ENCODE measurements at regions of chr9 and their contacts with region 1.

Region 1: DNA sequence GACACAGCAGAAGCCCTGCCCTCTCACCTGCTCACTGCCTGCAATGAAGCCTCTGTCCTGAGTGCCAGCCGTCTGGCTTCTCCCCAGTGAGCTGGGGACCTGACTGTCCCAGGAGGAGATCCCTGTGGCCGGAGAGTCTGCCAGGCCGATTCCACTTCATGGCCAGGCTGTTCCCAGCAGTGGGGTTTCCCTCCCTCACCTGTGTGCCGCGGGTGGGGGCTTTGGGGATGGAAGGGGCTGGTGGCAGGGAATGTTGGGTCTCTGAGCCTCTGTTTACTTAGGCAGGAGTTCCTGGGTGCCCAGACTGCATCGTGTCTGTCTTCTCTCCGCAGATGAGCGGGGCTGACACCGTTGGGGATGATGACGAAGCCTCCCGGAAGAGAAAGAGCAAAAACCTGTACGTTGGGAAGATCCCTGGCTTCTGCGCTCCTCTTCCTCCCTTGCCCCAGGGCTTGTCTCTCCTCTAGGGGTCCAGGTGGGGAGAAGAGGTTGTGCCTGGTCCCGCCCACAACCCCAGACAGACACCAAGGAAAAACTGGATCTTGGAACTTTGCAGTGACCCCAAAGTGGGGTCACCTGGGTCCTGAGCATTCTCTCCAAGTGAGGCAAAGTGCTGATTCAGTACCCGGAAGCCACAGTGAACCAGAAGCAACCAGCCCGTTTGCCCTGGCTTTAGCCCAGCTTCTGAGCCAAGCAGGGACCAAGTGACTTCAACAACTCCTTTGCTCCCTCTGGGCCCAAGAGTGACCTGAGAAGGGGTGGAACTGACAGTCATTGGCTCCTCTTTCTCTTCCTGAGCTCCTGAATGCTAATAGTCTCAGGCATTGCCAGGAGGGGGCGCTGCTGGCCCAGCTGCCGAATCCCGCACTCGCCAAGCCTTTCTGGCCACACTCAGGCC is 127.7 kb downstream of the RGS3 start:
- DNase-seq: peak; percentile 79
- H3K4me3 ChIP-seq: no peak overlapping the region
- H3K27ac ChIP-seq: peak overlapping the region; percentile 51
- H3K4me1 ChIP-seq: peaks cover 68% of the 10 kb centered on the region
- H3K27me3 ChIP-seq: no peaks in the 10 kb centered on the region
- CTCF ChIP-seq: peak; percentile 90 to 91
- POLR2A ChIP-seq: no peak

Region 2: DNA sequence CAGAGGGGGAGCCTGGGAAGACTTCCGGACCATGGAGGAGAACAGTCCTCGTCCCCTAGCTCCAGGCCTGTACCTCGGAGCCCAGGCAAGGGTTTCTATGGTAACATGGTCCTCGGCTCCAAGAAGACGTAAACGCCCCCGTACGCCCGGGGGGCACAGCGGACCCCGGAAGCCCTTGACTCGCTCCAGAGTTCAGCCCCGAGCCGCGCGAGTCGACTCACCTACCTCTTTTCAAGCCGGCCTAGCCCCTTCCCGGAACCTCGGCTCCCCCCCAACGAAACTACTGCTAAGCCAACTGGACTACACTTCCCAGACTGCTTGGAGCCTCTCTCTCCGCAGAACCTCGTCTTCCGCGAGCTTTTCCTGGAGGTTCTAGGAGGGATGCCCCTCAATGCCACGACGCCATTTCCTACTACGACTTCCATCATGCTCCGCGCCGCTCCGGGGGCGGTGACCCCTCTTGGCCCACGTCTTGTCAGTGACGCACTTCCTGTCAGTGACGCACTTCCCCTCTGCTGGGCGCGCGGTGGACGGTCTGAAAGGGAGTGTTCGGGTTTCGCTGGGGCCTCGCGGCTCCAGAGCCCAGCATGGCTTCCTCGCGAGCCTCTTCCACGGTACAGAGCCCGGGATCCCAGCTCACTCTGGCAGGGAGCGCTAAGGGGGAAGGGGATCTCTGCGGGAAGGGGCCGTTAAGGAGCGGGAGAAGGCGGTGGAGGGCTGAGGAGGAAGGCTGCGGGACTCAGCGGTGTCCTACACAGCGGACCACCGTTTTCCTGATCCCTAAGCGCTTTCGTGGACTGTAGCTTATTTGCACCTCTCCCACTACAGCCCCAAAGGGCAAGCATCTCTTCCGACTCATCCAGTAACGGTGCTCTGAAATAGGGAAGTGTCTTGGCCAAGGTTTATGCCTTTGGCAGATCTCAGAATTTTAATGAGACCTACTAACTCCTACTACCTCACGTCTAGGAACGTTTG is 315.8 kb before region 1 on chr9 and contains the starts of genes CDC26 and PRPF4:
- CTCF ChIA-PET with region 1: interaction called, 15 read pairs
- POLR2A ChIA-PET with region 1: no interaction called
- dilution Hi-C with region 1: no loop called
- intact Hi-C with region 1: loop called (anchors 2 kb)
- DNase-seq: peak; percentile 99
- H3K4me3 ChIP-seq: peak within 1 kb of the TSS; percentile 55 to 81 (median 74)
- H3K27ac ChIP-seq: peak within 1 kb of the TSS; percentile 94
- H3K4me1 ChIP-seq: peaks cover 13% of the 10 kb centered on the region
- H3K27me3 ChIP-seq: no peaks in the 10 kb centered on the region
- CTCF ChIP-seq: no peak
- POLR2A ChIP-seq: peak; percentile 94
- total RNA-seq, gene CDC26: 36.9 and 37.5 TPM in 2 replicates
- total RNA-seq, gene PRPF4: 24.2 and 25.8 TPM in 2 replicates

Region 3: GRCh38 chr9:113454914-113455761 is 136.1 kb before region 1 on chr9:
- CTCF ChIA-PET with region 1: interaction called, 14 read pairs
- POLR2A ChIA-PET with region 1: interaction called, 4 read pairs
- dilution Hi-C with region 1: no loop called
- intact Hi-C with region 1: no loop called
- DNase-seq: peak; percentile 97
- H3K4me3 ChIP-seq: no peak overlapping the region
- H3K27ac ChIP-seq: peak overlapping the region; percentile 94
- H3K4me1 ChIP-seq: peaks cover 22% of the 10 kb centered on the region
- H3K27me3 ChIP-seq: no peaks in the 10 kb centered on the region
- CTCF ChIP-seq: no peak
- POLR2A ChIP-seq: no peak

Region 4: DNA sequence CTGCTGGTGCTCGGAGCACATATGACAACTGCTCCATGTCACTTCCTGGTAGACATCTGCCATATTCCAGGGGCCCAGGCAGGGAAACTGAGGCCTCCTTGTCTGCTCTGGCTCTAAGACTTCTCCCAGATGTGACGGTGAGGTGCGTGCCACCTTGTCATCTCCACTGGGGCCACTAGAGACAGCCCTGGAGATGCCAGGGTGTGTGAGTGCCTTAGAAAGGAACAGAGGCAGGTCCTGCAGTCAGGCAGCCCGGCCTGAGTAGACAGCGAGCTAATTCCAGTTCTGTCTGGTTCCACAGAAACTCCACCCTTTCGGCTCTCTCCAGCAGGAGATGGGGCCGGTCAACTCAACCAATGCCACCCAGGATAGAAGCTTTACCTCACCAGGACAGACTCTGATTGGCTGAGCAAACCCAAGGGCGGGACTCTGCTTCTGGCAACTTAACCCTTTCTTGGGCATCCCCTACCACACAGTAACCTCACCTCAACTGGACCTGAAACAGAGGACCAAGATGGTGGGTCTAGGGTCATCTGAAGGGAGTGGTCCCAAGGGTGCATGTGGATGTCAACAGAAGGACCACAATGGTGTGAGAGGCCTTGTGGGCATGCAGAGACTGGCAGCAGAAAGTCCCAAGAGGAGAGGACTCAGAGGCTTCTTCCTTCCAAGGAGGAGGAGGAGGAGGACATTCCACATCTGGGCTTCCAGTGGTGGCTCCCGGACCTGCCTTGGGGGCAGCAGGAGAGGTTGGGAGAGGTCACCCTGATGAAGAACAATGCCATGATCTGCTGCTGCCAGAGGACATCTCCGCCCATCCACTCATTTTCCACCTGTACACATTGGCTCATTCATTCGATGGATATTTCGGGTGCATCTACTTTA is 50.0 kb before region 1 on chr9:
- CTCF ChIA-PET with region 1: interaction called, 11 read pairs
- POLR2A ChIA-PET with region 1: no interaction called
- dilution Hi-C with region 1: no loop called
- intact Hi-C with region 1: no loop called
- DNase-seq: peak; percentile 42
- H3K4me3 ChIP-seq: no peak overlapping the region
- H3K27ac ChIP-seq: no peak overlapping the region
- H3K4me1 ChIP-seq: peaks cover 5% of the 10 kb centered on the region
- H3K27me3 ChIP-seq: no peaks in the 10 kb centered on the region
- CTCF ChIP-seq: no peak
- POLR2A ChIP-seq: peak; percentile 10

Region 5: DNA sequence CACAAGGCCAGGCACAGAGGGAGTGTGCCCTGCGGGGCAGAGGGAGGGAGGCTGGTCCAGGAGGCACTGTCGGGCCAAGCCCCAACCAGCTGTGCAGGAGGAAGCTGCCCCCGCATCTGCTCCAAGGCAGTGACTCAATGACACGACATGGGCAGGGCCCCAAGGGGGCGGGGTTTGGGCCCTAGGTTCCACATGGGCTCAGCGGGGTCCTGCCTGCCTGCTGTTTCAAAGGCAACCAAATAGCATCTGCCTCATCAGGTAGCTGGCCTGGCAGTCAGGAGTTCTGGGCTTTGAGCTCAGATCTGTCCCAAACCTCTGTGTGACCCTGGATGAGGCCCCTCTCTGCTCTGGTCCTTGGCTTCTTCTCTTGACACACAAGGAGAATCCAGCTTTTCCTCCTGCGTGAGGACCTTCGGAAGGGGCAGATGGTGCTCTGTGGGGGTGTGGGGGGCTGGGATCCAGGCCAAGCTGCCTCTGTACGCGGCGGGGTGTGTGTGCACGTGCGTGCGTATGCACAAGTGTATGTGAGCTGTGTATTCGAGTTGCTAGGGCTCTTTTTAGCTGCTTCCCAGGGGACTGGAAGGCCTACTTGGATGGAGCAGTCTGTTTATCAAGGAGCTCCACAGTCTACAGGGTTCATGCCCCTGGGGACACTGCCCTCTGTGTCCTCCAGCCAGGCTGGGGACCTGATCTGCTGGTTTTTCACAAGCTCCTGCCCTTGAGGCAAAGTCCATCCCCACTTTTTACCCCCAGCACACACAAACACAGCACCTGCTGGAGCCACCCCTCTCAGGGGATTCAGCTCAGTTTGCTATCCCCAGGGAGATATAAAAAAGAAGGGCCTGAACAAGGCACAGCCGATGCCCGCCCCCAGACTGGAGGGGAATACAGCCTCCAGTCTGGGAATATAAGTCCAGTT is 11.1 kb after region 1 on chr9:
- CTCF ChIA-PET with region 1: interaction called, 29 read pairs
- POLR2A ChIA-PET with region 1: interaction called, 11 read pairs
- dilution Hi-C with region 1: no loop called
- intact Hi-C with region 1: no loop called
- DNase-seq: peak; percentile 63
- H3K4me3 ChIP-seq: no peak overlapping the region
- H3K27ac ChIP-seq: no peak overlapping the region
- H3K4me1 ChIP-seq: peaks cover 45% of the 10 kb centered on the region
- H3K27me3 ChIP-seq: no peaks in the 10 kb centered on the region
- CTCF ChIP-seq: no peak
- POLR2A ChIP-seq: no peak

Region 6: DNA sequence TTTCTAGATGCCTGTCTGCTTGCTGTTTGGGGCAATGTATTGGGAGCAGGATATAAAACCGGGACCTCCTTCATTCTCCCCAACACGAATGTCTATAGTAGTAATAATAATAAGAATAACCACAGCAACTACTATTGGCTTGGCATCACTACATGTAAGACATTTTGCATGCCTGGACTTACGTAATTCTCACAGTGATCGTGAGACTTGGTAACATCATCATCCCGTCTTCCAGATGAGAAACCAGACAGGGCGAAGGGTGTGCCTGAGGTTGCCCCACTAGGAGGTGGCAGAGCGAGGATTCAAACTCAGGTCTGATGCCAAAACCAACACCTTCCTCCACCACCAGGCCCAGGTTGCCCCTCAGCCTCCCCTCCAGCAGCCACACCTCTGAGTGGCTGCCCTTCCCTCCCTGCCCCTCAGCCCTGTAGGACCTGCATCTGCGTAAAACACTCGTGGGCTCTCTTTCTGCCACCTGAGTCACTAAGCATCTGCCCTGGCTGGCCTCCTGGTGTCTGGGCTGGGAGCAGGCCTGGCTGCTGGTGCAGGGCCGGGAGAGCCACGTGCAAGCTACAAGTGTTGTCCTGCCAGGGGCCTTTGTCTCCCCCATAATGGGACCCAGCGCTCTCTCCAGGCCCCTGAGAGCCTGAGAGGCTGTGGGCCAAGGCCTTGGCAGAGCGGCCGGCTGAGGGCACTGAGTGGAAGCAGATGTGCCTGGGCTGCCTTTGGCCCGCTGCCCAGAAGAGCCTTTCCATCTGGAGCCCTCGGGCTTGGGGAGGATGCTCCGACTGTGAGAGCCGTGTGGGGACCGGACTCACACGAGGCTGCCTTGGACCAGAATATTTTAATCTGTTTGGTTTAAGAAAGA is 57.6 kb after region 1 on chr9:
- CTCF ChIA-PET with region 1: interaction called, 1,173 read pairs
- POLR2A ChIA-PET with region 1: interaction called, 71 read pairs
- dilution Hi-C with region 1: loop called (anchors 10 kb)
- intact Hi-C with region 1: no loop called
- DNase-seq: peak; percentile 64
- H3K4me3 ChIP-seq: no peak overlapping the region
- H3K27ac ChIP-seq: no peak overlapping the region
- H3K4me1 ChIP-seq: peaks cover 21% of the 10 kb centered on the region
- H3K27me3 ChIP-seq: no peaks in the 10 kb centered on the region
- CTCF ChIP-seq: no peak
- POLR2A ChIP-seq: no peak